SK-N-SH (cell line): ENCODE measurements at regions of chr9 and their contacts with region 1.

Region 1: GRCh38 chr9:124617471-124618141 is 110.4 kb upstream of the NR5A1 start:
- DNase-seq: peak; percentile 78
- H3K4me3 ChIP-seq: no peak overlapping the region; a peak in 1 of 4 replicates
- H3K27ac ChIP-seq: no peak overlapping the region
- H3K4me1 ChIP-seq: peaks cover 8 to 10% of the 10 kb centered on the region in 2 experiments
- H3K27me3 ChIP-seq: no peaks in the 10 kb centered on the region
- CTCF ChIP-seq: peak; percentile 95
- EP300 ChIP-seq: no peak
- RAD21 ChIP-seq: peak; percentile 99

Region 2: DNA sequence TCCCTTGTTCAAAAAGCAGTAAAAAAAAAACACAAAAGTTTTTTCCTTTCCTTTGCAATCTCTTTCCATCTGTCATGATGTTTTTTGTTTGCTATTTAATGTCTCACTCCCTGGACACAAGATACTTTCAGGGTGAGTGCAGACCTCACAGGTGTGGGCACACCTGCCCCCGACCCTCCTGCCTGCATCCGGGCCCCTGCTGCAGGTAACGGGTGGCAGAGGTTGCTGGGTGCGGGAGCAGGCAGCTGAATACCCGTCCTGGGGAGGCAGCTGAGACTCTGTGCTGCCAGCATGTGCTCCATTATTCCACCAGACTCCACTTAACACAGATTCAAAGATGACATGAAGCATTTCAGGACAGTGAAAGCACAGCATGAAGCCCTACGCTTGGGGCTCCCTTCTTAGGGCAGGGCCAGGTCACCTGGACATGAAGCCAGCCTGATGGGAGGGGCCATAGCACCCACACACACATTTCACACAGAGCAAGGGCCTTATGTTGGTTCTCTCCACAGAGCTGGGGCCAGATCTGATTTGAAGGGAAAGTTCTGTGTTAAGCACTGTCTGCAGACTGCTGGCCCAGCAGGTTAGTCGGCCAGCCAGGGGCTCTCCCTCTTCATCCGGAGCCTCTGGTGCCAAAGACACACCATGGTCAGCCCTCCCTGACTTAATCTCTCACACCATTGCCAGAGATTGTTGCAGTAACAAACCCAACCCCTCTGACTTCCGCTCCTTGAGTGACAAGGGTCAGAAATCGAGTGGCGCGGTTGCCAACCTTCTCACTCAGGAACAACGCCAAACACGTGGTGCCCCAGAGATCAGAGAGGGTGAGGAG is 346.9 kb before region 1 on chr9:
- CTCF ChIA-PET with region 1: no interaction called
- POLR2A ChIA-PET with region 1: no interaction called
- DNase-seq: no peak
- H3K4me3 ChIP-seq: no peak overlapping the region
- H3K27ac ChIP-seq: no peak overlapping the region; a peak in 1 of 4 replicates
- H3K4me1 ChIP-seq: peaks cover 11 to 37% of the 10 kb centered on the region in 2 experiments; a peak in 3 of 4 replicates
- H3K27me3 ChIP-seq: no peaks in the 10 kb centered on the region
- CTCF ChIP-seq: no peak
- EP300 ChIP-seq: no peak
- RAD21 ChIP-seq: no peak

Region 3: GRCh38 chr9:124482431-124483031 is 135.1 kb before region 1 on chr9:
- CTCF ChIA-PET with region 1: no interaction called
- POLR2A ChIA-PET with region 1: no interaction called
- DNase-seq: peak; percentile 78
- H3K4me3 ChIP-seq: no peak overlapping the region
- H3K27ac ChIP-seq: no peak overlapping the region
- H3K4me1 ChIP-seq: peaks cover 0 to 4% of the 10 kb centered on the region in 2 experiments; a peak in 1 of 4 replicates
- H3K27me3 ChIP-seq: no peaks in the 10 kb centered on the region; the same call in 1 of the 2 replicates
- CTCF ChIP-seq: no peak
- EP300 ChIP-seq: no peak
- RAD21 ChIP-seq: no peak

Region 4: GRCh38 chr9:124522121-124523098 is 95.2 kb before region 1 on chr9:
- CTCF ChIA-PET with region 1: no interaction called
- POLR2A ChIA-PET with region 1: no interaction called
- DNase-seq: no peak
- H3K4me3 ChIP-seq: no peak overlapping the region
- H3K27ac ChIP-seq: no peak overlapping the region
- H3K4me1 ChIP-seq: peaks cover 0 to 15% of the 10 kb centered on the region in 2 experiments; a peak in 1 of 4 replicates
- H3K27me3 ChIP-seq: no peaks in the 10 kb centered on the region
- CTCF ChIP-seq: no peak
- EP300 ChIP-seq: no peak
- RAD21 ChIP-seq: no peak

Region 5: DNA sequence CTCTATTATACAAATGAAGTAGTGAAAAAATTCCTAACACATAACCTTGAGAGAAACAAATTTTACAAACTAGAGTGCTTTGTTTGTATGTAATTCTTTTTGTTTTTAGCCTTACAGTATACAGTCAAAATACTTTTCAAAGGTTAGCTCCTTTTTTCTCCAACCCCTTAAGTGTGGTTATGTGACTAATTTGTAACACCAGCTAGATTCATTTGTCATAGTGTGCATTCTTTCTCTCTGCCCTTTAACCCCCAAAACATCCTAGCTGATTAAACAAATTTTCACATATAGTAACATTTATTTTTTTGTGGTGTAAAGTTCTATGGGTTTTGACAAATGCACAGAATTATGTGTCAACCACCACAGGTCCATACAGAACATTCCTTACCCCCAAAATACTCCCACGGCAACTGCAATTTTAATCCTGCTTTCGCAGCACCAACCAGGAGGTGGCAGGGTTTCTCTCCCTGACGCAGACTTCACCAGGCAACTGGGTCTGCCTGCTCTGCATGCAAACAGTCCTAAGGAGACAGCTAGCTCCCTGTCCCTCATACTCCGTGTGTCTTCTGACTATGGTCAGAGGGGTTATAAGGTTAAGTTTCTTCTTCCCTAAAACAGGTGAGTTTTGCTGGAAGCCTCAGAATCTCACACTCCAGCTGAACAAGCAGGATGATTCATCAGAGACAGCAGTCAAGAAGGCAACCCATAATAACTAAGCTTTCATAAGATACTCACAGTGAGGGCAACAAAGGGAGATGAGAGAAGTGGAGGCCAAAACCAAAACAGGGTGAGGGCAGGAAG is 65.9 kb before region 1 on chr9:
- CTCF ChIA-PET with region 1: interaction called, 58 read pairs
- POLR2A ChIA-PET with region 1: no interaction called
- DNase-seq: peak; percentile 66
- H3K4me3 ChIP-seq: peak overlapping the region in 1 of 2 experiments; percentile 13; a peak in 1 of 4 replicates
- H3K27ac ChIP-seq: peak overlapping the region in 1 of 2 experiments; percentile 33; a peak in 2 of 4 replicates
- H3K4me1 ChIP-seq: peaks cover 3 to 5% of the 10 kb centered on the region in 2 experiments; a peak in 2 of 4 replicates
- H3K27me3 ChIP-seq: no peaks in the 10 kb centered on the region
- CTCF ChIP-seq: peak; percentile 88
- EP300 ChIP-seq: no peak
- RAD21 ChIP-seq: peak; percentile 87

Region 6: DNA sequence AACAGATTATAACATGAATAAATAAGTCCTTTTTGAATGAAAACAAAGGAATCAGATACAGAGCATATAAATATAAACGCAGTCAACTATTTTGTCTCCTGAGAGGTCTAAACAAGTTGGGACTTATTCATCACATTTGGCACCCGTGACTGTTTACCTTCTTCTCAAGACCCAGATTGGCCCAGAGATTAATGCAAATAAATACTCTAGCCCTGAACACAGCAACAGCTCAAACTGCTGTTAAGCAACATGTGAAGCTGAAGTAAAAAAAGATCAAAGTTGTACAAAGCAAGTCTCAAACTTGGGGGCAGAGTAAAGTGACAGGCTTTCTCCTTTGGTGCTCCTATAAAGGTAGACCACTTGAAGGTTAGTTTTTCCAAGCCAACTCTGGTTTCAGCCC is 15.4 kb before region 1 on chr9:
- CTCF ChIA-PET with region 1: interaction called, 45 read pairs
- POLR2A ChIA-PET with region 1: no interaction called
- DNase-seq: no peak
- H3K4me3 ChIP-seq: no peak overlapping the region
- H3K27ac ChIP-seq: no peak overlapping the region
- H3K4me1 ChIP-seq: no peaks in the 10 kb centered on the region
- H3K27me3 ChIP-seq: no peaks in the 10 kb centered on the region
- CTCF ChIP-seq: no peak
- EP300 ChIP-seq: no peak
- RAD21 ChIP-seq: no peak

Region 7: DNA sequence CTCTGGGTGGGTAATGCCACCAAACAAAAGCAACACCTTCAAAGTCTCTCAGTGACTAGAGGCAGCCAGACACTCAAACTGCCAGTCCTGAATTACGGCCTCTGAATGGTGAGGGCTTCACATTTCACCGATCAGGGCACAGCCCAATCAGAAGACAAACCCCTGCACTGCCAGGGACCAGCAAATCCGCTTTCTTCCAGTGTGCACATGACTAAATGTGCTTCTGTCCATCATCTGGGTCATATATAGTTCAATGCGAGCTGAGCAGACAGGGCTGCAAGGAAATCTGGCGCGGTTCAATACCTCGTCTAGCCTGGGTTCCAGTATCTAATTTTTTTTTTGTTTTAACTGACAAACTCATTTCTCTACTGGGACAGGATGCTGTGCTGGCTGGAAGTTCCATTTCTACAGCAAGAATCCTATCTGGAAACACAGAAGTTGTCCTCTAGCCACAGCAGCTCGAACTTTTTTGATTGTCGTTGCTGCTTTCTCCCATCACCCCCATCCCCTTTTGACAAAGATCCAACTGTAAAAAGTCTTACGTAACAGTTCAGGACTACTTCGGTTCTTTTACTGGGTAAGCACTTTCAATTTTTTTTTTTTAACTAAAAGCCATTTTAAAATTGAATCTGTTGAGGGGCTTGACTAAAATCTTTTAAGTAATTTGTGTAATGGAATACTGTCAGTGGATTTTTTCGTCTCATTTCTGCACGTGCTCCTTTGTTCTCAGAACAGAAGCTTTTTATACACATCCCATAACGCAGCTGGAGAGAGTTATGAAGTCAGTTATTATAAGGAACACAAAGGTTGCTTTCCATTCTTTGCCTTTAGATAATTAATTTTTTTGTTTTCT is 40.8 kb after region 1 on chr9:
- CTCF ChIA-PET with region 1: interaction called, 52 read pairs
- POLR2A ChIA-PET with region 1: interaction called, 4 read pairs
- DNase-seq: peak; percentile 76
- H3K4me3 ChIP-seq: peak overlapping the region; percentile 83 to 85
- H3K27ac ChIP-seq: peak overlapping the region; percentile 97 to 100
- H3K4me1 ChIP-seq: peaks cover 30% of the 10 kb centered on the region in 2 experiments; a peak in 3 of 4 replicates
- H3K27me3 ChIP-seq: no peaks in the 10 kb centered on the region
- CTCF ChIP-seq: no peak
- EP300 ChIP-seq: no peak
- RAD21 ChIP-seq: no peak

Region 8: GRCh38 chr9:124721109-124721906 is 103.7 kb after region 1 on chr9:
- CTCF ChIA-PET with region 1: interaction called, 301 read pairs
- POLR2A ChIA-PET with region 1: no interaction called
- DNase-seq: no peak
- H3K4me3 ChIP-seq: peak overlapping the region in 1 of 2 experiments; percentile 22; a peak in 1 of 4 replicates
- H3K27ac ChIP-seq: peak overlapping the region; percentile 70 to 91
- H3K4me1 ChIP-seq: peaks cover 10 to 38% of the 10 kb centered on the region in 2 experiments
- H3K27me3 ChIP-seq: no peaks in the 10 kb centered on the region
- CTCF ChIP-seq: no peak
- EP300 ChIP-seq: peak in 1 of 2 experiments; percentile 58; a peak in 2 of 4 replicates
- RAD21 ChIP-seq: no peak

Region 9: DNA sequence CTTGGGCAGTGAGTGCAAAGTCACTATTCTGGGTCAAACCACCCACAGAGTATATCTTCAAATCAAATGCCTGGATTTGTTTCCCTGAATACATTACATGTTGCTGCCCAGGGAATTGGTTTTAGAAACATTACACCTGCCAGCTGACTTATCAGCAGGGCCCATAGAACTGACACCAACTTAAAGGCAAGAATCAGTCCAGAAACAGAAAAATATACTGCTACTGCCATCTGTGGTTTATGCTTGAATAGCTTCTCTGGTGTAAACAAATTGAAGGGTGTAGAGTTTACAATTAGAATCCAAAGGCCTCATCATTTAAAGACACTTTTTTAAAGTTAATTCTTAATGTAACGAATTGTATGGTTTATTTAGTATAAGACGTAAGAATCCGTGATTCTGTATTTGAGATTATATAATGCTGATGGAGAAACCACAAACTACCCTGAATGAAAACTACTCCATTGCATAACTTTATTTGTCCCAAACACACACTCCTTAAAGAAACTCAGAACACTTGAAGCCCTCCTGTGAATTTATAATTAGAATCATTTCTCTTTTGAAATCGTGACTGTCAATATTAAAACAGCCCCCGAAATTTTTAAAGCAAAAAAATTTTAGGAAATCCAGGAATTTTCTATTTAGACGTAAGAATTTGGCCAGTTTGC is 147.3 kb after region 1 on chr9:
- CTCF ChIA-PET with region 1: interaction called, 21 read pairs
- POLR2A ChIA-PET with region 1: no interaction called
- DNase-seq: no peak
- H3K4me3 ChIP-seq: no peak overlapping the region
- H3K27ac ChIP-seq: no peak overlapping the region
- H3K4me1 ChIP-seq: peaks cover 8 to 16% of the 10 kb centered on the region in 2 experiments; a peak in 3 of 4 replicates
- H3K27me3 ChIP-seq: no peaks in the 10 kb centered on the region
- CTCF ChIP-seq: peak; percentile 56
- EP300 ChIP-seq: no peak
- RAD21 ChIP-seq: peak; percentile 65